Breast epithelium (tissue), 4 donors: ENCODE measurements at regions of chrX and their contacts with region 1.

Region 1: DNA sequence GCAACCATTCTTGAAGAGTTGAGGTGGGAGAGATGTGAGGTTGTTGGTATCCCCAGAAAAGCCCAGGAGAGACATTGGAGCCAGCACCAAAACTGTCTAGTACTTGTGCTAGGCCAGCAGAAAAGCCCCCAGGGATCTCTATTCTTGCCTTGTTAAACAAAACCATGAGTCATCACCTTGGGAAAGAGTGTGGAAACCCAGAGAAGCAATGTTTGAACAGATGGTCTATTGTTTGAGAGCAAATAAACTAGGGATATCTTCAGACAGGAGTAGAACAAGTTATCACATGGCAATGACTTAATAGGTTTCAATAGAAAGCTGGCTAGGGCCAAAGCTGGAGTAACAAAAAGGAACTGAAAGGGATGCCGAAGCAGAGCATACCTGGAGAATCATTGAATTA is 195.7 kb upstream of the CASK start:
- DNase-seq: peak in 1 of 2 donors; percentile 57
- H3K4me3 ChIP-seq: no peak overlapping the region
- H3K27ac ChIP-seq: peak overlapping the region; percentile 57 to 68
- H3K4me1 ChIP-seq: no peaks in the 10 kb centered on the region
- H3K27me3 ChIP-seq: peaks cover 0 to 6% of the 10 kb centered on the region in 2 donors
- CTCF ChIP-seq: no peak
- POLR2A ChIP-seq: no peak

Region 2: DNA sequence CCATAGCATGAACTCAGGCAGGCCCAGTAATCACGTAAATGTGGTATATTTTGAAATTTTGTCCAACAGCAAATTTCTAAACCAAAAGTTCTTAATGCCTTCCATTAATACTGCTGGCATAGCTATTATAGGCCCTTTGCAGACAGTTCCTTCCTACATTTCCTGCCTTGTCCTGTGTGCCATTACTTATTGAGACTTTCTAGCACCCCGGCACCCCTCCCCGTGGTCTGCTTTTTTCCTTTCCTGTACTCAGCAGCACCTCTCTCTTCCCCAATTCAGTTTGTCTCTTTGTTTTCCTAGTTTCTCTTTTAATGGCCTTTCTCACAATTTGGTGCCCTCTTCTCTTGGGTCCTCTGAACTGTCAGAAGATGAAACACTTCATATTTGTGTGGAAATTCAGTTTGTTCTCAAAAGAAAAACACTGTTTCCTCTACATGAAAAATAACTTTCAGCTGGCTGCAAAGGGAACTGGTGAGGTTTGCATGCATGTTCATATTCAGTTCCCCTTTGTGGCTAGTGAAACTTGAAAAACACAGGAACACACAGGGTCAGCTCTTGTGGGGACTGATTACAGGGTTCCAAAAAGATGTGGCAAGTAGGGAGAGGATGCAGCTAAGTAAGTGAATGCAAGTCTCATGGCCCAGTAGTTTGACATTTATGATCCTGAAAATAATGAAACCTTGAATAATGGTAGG is 413.2 kb before region 1 on chrX:
- intact Hi-C with region 1: no loop called
- DNase-seq: no peak
- H3K4me3 ChIP-seq: no peak overlapping the region
- H3K27ac ChIP-seq: no peak overlapping the region
- H3K4me1 ChIP-seq: no peaks in the 10 kb centered on the region
- H3K27me3 ChIP-seq: peaks cover 0 to 18% of the 10 kb centered on the region in 2 donors
- CTCF ChIP-seq: no peak
- POLR2A ChIP-seq: no peak

Region 3: GRCh38 chrX:41802958-41803357 is 316.1 kb before region 1 on chrX:
- intact Hi-C with region 1: no loop called
- DNase-seq: no peak
- H3K4me3 ChIP-seq: no peak overlapping the region
- H3K27ac ChIP-seq: no peak overlapping the region
- H3K4me1 ChIP-seq: no peaks in the 10 kb centered on the region
- H3K27me3 ChIP-seq: peaks cover 0 to 12% of the 10 kb centered on the region in 2 donors
- CTCF ChIP-seq: no peak
- POLR2A ChIP-seq: no peak

Region 4: DNA sequence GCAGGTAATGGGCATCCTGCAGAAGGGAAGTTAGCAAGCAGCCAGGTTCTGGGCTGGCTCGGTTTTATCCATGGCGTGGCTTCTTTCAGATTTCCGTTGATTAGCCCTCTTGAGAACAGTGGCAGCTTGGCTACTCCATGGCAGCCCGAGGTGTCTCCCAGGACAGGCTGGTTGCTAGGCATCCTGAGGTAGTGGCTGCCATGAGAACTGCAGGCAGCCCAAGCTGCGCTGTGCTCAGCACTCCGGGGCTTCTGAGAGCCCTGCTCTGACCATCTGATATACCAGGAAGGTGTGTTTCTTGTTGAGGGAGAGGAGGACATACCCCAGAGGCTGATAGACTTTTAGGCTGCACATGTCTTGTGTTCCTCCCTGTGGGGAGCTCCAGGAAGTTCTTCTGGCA is 57.7 kb after region 1 on chrX:
- intact Hi-C with region 1: loop called (anchors 2 kb)
- DNase-seq: no peak
- H3K4me3 ChIP-seq: no peak overlapping the region
- H3K27ac ChIP-seq: no peak overlapping the region
- H3K4me1 ChIP-seq: no peaks in the 10 kb centered on the region
- H3K27me3 ChIP-seq: peaks cover 0 to 32% of the 10 kb centered on the region in 2 donors
- CTCF ChIP-seq: no peak
- POLR2A ChIP-seq: no peak